ENCODE measurements at regions of chr9 and their contacts with region 1.

Region 1: GRCh38 chr9:113511856-113512761 is 48.6 kb downstream of the RGS3 start:
- DNase-seq: peak; percentile 84
- ATAC-seq: peak; percentile 72
- H3K4me3 Mint-ChIP-seq: peak overlapping the region; percentile 57
- H3K27ac Mint-ChIP-seq: peak overlapping the region; percentile 93
- H3K4me1 Mint-ChIP-seq: peaks cover 58% of the 10 kb centered on the region
- H3K27me3 Mint-ChIP-seq: no peaks in the 10 kb centered on the region

Region 2: GRCh38 chr9:113154471-113154870 is 357.6 kb before region 1 on chr9:
- CTCF ChIA-PET with region 1: no interaction called
- POLR2A ChIA-PET with region 1: no interaction called
- intact Hi-C with region 1: no loop called
- DNase-seq: no peak
- ATAC-seq: no peak
- H3K4me3 Mint-ChIP-seq: no peak overlapping the region
- H3K27ac Mint-ChIP-seq: no peak overlapping the region
- H3K4me1 Mint-ChIP-seq: peaks cover 38% of the 10 kb centered on the region
- H3K27me3 Mint-ChIP-seq: no peaks in the 10 kb centered on the region

Region 3: DNA sequence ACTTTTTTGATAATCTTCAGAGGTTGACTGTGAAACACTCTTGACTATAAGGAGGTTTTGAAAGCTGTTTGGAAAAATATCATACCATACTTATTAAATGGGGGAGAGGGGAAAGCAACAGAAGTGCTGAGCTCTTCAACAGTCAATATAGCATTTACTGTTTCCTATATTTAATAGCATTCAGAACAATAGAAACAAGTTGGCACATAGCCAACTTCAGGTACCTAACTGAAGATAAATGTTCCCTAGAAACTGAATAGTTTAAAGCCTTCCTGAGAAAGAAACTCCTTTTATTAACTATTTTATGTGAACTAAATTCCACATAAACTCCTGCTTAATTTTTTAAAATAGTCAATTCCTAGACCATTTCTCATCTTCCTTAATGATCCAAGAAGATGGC is 264.5 kb before region 1 on chr9:
- CTCF ChIA-PET with region 1: no interaction called
- POLR2A ChIA-PET with region 1: no interaction called
- intact Hi-C with region 1: no loop called
- DNase-seq: no peak
- ATAC-seq: no peak
- H3K4me3 Mint-ChIP-seq: no peak overlapping the region
- H3K27ac Mint-ChIP-seq: no peak overlapping the region
- H3K4me1 Mint-ChIP-seq: no peaks in the 10 kb centered on the region
- H3K27me3 Mint-ChIP-seq: no peaks in the 10 kb centered on the region

Region 4: GRCh38 chr9:113350937-113351336 is 161.2 kb before region 1 on chr9:
- CTCF ChIA-PET with region 1: no interaction called
- POLR2A ChIA-PET with region 1: no interaction called
- intact Hi-C with region 1: no loop called
- DNase-seq: peak; percentile 67
- ATAC-seq: peak; percentile 47
- H3K4me3 Mint-ChIP-seq: peak overlapping the region; percentile 75
- H3K27ac Mint-ChIP-seq: peak overlapping the region; percentile 71
- H3K4me1 Mint-ChIP-seq: peaks cover 36% of the 10 kb centered on the region
- H3K27me3 Mint-ChIP-seq: peaks cover 37% of the 10 kb centered on the region

Region 5: DNA sequence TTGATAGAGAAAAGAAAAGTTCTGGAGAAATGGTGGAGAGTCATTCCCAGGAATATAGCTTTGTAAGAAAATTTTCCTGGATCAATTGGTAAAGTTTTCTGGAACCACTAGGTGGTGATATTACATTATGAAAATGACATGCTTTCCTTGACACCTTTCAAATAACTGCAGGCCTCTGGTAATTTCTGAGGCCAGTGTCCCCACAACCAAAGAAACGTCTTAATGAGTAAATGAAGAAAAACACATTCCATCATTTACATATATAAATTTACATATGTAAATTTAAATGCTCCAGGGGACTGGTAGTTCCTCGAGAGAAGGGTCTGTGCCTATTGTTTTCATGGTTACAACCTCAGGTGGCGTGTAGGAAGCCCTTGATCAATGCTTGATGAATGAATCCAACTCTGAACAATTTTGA is 65.8 kb before region 1 on chr9:
- CTCF ChIA-PET with region 1: interaction called, 11 read pairs
- POLR2A ChIA-PET with region 1: no interaction called
- intact Hi-C with region 1: loop called in 1 of 2 experiments (anchors 5 kb)
- DNase-seq: peak; percentile 28
- ATAC-seq: peak; percentile 47
- H3K4me3 Mint-ChIP-seq: no peak overlapping the region
- H3K27ac Mint-ChIP-seq: no peak overlapping the region
- H3K4me1 Mint-ChIP-seq: peaks cover 3% of the 10 kb centered on the region
- H3K27me3 Mint-ChIP-seq: no peaks in the 10 kb centered on the region

Region 6: DNA sequence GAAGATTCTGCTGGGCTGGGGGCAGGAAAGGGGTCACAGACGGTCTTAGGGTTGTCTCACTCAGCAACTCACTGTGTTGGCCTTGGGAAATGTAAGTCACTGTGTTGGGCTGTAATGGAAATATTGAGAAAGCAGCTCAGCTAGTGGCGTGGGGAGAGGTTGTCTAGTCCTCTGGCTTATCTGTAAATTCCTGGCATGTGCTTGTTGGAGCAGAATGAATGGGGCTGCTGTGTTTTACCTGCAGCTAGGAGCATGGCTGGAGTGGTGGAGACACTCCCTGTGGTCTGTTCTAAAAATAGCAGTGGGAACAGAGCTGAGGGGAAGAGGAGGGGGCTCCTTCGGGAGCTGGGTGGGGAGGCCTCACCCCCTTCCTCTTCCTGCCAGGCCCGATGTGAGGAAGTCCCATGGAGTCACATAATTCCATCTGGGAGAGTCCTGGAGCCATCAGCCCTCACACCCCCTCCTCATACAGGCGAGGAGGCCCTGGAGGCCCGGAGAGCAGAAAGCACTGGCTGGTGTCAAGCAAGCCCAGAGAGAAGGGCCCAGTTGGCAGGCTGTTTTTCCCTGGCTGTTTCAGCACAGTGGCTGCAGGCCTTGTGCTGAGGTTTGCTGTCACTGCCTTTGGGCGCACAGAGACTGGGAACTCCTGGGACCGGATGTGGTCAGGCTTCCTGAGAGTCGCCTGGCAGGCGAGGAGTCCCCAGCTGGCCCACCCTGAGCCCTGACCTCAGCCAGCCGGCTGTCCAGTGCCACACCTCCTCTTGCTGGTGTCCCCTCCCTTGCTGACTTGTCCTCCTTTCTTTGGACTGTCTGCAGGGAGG is 36.3 kb after region 1 on chr9:
- CTCF ChIA-PET with region 1: no interaction called
- POLR2A ChIA-PET with region 1: interaction called, 3 read pairs
- intact Hi-C with region 1: loop called in 1 of 2 experiments (anchors 2 kb)
- DNase-seq: peak; percentile 52
- ATAC-seq: peak; percentile 85
- H3K4me3 Mint-ChIP-seq: no peak overlapping the region
- H3K27ac Mint-ChIP-seq: peak overlapping the region; percentile 88
- H3K4me1 Mint-ChIP-seq: peaks cover 25% of the 10 kb centered on the region
- H3K27me3 Mint-ChIP-seq: no peaks in the 10 kb centered on the region